AG04450 (cell line): ENCODE measurements at regions of chr14 and their contacts with region 1.

Region 1: DNA sequence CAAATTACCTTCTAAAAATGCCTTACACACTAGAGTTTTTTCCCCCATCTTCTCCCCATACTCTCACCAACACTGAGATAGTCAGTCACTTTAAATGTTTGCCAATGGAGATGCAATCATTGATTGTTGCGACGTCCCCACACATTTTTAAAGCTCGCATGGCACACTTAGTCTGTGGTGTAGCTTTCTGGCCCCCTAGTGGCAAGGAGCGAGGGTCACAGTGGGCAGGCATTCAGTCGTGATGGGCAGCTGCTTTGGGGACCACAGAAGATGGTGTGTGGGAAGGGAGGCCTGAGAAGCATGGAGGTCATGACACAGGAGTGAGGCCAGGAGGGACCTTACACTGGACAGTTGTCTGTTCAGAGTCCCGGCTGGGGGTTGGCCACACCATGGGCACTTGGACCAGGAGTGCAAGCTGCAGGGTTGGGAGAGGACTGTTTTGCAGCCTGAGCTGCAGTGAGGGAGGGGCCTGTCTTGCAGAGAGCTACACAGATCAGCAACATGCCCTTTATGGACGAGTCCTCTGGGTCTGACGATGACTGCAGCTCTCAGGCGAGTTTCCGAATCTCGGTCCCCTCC is 28.7 kb downstream of the PIGH start:
- DNase-seq: no peak
- H3K4me3 ChIP-seq: no peak overlapping the region
- H3K27ac ChIP-seq: no peak overlapping the region
- H3K27me3 ChIP-seq: peaks cover 24% of the 10 kb centered on the region
- CTCF ChIP-seq: peak; percentile 94

Region 2: DNA sequence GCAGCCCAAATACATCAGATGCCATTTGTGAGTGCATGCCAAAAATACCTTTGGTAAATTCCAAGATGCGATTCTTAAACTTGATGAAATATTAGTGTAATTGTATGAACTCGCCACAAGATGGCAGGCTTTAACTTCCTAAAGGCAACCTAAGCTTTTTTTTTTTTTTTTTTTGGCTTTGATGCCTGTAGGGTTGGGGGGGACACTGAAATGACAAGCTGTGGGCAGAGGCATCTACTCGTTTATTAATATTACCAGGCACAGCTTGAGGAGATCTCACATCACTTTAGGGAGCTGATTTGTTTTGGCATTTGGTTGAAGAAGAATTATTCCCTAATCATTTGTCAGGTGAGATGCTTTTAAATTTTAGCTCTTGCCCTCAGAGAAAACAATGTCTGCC is 1211.9 kb before region 1 on chr14:
- CTCF ChIA-PET with region 1: interaction called, 22 read pairs
- POLR2A ChIA-PET with region 1: no interaction called
- DNase-seq: peak; percentile 50
- H3K4me3 ChIP-seq: no peak overlapping the region
- H3K27ac ChIP-seq: no peak overlapping the region
- H3K27me3 ChIP-seq: no peaks in the 10 kb centered on the region
- CTCF ChIP-seq: peak; percentile 71

Region 3: DNA sequence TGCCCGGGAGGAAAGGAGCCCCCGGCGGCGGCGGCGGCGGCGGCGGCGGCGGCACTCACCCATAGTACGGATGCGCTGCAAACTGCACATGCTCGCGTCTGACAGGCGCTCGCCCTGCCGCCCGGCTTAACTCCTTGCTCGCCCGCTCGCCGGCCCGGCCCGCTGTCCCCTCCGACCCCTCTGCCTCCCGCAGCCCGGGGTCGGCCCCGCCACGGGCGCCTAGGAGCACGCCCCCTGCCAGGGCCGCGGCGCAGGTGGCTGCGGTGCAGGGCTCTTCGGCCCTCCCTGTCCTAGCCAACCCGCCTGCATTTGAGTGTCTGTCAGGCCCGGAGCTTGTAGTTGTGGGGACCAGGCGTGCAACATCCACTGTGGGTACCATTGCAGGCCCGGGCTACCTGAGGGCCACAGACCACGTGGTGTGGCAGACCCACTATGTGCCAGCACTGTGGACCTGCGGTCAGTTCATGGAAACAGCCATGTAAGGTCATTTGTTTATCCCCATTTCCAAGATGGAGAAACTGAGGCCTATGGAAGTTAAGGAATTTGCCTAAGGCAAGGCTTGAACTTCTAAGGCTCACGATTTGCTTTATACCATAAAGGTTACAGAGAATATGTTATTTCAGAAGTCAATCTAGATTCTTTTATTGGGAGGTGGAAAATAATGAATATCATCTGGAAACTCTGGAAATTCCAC is 55.8 kb before region 1 on chr14:
- CTCF ChIA-PET with region 1: interaction called, 17 read pairs
- POLR2A ChIA-PET with region 1: no interaction called
- DNase-seq: no peak
- H3K4me3 ChIP-seq: peak overlapping the region; percentile 65
- H3K27ac ChIP-seq: no peak overlapping the region
- H3K27me3 ChIP-seq: peaks cover 65% of the 10 kb centered on the region
- CTCF ChIP-seq: no peak

Region 4: DNA sequence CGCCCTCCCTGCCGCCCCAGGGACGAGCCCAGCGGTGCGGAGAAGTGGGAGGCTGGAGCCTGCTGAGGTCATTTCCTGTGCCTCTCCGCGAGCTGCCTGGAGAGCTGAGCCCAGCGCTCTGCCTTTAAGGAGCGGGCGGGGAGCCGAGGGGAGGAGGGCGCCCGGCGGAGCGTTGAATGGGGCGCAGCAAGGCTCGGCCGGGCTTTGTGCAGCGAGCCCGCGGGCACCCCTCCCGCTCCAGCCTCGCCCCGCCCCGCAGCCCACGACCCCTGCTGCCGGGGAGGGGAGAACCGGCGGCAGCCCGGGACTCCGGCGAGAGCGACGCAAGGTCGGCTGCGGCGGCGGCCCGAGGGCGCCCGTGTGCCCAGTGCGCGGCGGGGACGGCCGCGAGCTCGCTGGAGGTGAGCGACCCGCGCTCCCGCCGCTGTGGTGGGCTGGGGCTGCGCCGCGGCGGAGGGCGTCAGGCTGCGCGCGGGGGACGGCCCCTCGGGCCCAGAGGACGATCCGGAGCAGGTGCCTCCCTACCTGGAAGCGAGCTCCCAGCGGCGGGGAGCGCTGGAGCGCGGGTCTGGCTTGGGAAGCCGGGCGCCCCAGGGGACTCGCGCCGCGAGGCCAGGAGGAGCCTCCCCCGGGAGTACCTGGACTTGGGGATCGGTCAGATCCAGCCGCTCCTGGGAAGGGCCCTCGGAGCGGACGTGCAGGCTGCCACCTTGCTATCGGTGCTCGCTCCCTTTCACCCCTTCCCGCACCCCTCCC is 38.2 kb before region 1 on chr14 and contains the start of gene PLEKHH1:
- CTCF ChIA-PET with region 1: interaction called, 55 read pairs
- POLR2A ChIA-PET with region 1: no interaction called
- DNase-seq: no peak
- H3K4me3 ChIP-seq: peak within 1 kb of the TSS; percentile 54
- H3K27ac ChIP-seq: no peak within 1 kb of the TSS
- H3K27me3 ChIP-seq: peaks cover 30% of the 10 kb centered on the region
- CTCF ChIP-seq: no peak
- polyA plus RNA-seq, gene PLEKHH1: 0.15 and 0.19 TPM in 2 replicates

Region 5: DNA sequence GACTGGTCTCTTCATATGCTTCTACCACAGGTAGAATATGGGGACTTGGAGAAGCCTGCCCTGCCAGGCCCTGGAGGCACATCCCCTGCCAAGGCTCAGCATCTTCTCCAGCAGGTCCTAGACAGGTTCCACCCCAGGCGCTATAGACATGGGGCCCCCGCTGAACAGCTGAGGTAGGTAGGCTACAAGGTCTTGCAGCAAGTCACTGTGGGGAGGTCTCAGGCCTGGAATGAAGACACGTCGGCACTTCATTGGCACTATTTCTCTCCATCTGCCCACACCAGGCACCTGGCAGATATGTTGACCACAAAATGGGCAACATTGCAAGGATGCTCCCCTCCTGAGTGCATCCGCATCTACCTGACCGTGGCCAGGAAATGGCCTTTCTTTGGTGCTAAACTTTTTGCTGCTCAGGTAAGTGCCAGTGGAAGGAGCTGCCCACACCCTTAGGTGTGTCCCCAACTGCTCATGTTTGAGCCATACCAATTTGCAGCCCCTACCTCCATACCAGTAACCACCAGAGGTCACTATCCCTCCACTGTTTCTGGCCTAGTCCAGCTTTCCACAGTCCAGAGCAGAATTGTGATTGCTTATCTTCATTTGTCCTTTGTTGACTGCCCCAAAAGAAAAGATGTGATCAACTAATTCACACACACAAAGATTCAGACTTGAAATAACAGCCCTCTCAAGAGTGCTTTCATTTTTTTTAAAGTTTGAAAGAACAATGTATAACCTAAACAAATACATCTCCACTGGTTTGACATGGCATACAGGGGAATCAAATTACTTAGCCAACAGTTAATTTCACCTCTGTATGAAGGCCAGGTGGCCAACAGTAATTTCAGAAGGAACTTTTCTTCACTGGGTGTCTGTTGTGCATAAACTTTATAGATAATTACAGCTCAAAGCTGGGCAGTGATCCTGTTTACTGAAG is 12.6 kb after region 1 on chr14:
- CTCF ChIA-PET with region 1: interaction called, 37 read pairs
- POLR2A ChIA-PET with region 1: no interaction called
- DNase-seq: no peak
- H3K4me3 ChIP-seq: no peak overlapping the region
- H3K27ac ChIP-seq: no peak overlapping the region
- H3K27me3 ChIP-seq: peaks cover 5% of the 10 kb centered on the region
- CTCF ChIP-seq: peak; percentile 85